PC-9 (cell line): ENCODE measurements at regions of chr16 and their contacts with region 1.

Region 1: GRCh38 chr16:29877266-29877961 is 14.4 kb upstream of the CDIPT start:
- DNase-seq: peak in 1 of 2 experiments; percentile 51
- H3K4me3 ChIP-seq: no peak overlapping the region
- H3K27ac ChIP-seq: no peak overlapping the region
- H3K4me1 ChIP-seq: no peaks in the 10 kb centered on the region
- H3K27me3 ChIP-seq: no peaks in the 10 kb centered on the region
- CTCF ChIP-seq: no peak

Region 2: GRCh38 chr16:28991687-28992086 is 885.7 kb before region 1 on chr16:
- CTCF ChIA-PET with region 1: no interaction called
- POLR2A ChIA-PET with region 1: interaction called, 27 read pairs
- intact Hi-C with region 1: no loop called
- DNase-seq: no peak
- H3K4me3 ChIP-seq: no peak overlapping the region
- H3K27ac ChIP-seq: no peak overlapping the region
- H3K4me1 ChIP-seq: no peaks in the 10 kb centered on the region
- H3K27me3 ChIP-seq: no peaks in the 10 kb centered on the region
- CTCF ChIP-seq: no peak